CD8-positive, alpha-beta T cell (primary cell): ENCODE measurements at regions of chr7 and their contacts with region 1.

Region 1: DNA sequence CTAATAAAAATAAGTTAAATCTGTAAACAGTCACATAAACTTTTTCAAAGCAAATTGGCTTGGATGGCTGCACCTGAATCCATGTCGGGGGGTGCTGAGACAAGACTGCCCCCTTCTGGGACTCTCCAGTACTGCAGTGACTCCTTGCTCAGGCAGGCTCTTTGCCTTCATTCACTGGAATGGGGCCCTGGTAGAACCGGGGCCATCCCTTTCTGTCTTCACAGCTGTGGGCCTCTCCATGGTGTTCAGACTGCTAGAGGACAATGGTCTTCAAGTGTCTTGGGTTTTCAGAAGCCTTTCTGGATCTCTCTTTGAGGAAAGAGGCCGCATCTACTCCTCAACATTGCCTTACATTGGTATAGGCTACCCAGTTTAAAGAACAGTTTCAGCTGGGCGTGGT is 16.1 kb upstream of the IMPDH1 start:
- DNase-seq: peak; percentile 56 to 85 (median 81)
- ATAC-seq: peak; percentile 80
- H3K4me3 ChIP-seq: no peak overlapping the region
- H3K4me3 Mint-ChIP-seq: no peak overlapping the region
- H3K27ac ChIP-seq: no peak overlapping the region
- H3K27ac Mint-ChIP-seq: no peak overlapping the region
- H3K4me1 ChIP-seq: no peaks in the 10 kb centered on the region
- H3K4me1 Mint-ChIP-seq: peaks cover 8% of the 10 kb centered on the region
- H3K27me3 ChIP-seq: no peaks in the 10 kb centered on the region
- H3K27me3 Mint-ChIP-seq: peaks cover 10% of the 10 kb centered on the region
- CTCF ChIP-seq: peak; percentile 96

Region 2: DNA sequence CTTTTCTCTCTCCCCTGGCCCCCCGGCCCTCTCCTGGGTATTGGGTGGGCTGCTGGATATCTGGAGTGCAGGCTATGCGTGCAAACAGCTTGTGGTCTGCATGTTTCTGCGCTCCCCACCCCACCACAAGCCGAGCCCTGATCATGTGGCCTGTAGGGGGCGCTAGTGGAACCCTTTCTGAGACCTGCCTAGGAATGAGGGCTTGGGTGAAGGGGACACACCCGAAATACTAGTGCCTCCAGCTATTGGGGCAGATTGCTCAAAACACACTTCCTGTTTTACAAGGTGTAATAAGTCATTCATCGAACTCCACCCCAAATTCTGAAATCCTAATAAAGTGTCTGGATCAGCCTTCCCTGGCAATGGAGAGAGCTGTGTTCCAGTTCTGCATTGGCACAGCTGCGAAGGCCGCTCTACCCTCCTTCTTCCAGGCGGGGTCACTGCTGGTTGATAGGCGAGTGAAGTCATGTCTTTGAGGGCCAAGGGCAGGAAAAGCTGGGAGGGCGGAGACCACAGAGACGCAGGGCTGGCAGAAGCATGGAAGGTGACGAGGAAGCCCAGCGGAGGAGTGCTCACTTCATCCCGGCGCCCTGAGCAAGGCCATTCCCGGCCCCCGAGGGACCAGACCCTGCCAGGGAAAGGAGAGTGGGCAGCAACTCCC is 44.6 kb before region 1 on chr7:
- CTCF ChIA-PET with region 1: interaction called, 34 read pairs
- POLR2A ChIA-PET with region 1: no interaction called
- intact Hi-C with region 1: no loop called
- DNase-seq: peak in 3 of 9 experiments; percentile 42 to 47 (median 44)
- ATAC-seq: no peak
- H3K4me3 ChIP-seq: no peak overlapping the region
- H3K4me3 Mint-ChIP-seq: no peak overlapping the region
- H3K27ac ChIP-seq: no peak overlapping the region
- H3K27ac Mint-ChIP-seq: no peak overlapping the region
- H3K4me1 ChIP-seq: no peaks in the 10 kb centered on the region
- H3K4me1 Mint-ChIP-seq: no peaks in the 10 kb centered on the region
- H3K27me3 ChIP-seq: no peaks in the 10 kb centered on the region
- H3K27me3 Mint-ChIP-seq: no peaks in the 10 kb centered on the region
- CTCF ChIP-seq: peak; percentile 50

Region 3: DNA sequence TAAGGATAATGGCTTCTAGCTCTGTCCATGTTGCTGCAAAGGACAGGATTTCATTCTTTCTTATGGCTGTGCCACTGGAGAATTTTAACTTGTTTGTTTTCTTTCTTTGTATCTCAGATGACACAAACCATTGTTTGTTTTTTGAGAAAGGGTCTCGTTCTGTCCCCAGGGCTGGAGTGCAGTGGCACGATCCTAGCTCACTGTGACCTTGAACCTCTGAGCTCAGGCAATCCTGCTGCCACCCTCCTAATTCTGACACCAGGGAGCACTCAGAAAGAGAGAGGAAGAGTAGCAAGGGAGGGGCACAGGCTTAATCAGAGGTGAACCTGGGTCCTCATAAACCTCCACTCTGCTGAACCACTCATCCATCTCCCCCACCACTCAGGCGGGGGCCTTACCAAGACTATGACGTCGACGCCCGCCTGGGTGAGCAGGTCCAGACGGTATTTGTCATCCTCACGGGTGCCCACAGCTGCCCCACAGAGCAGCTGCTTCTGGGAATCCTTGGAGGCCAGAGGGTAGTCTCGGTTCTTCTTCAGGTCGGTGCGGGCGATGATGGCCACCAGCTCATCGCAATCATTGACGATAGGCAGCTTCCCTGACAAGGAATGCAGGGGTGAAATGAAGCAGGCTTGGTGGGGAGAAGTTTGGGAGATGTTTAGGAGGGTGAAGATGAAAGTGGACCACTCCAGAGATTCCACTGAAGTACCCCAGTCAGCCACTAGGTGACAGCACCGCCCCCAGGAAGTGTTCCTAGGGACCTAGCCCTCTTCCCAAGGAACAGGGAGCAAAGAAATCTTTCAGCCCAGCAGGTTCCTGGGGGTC is 27.6 kb before region 1 on chr7:
- CTCF ChIA-PET with region 1: interaction called, 389 read pairs
- POLR2A ChIA-PET with region 1: no interaction called
- intact Hi-C with region 1: loop called in 1 of 2 experiments (anchors 1 kb)
- DNase-seq: peak in 8 of 9 experiments; percentile 27 to 65 (median 50)
- ATAC-seq: peak; percentile 75
- H3K4me3 ChIP-seq: no peak overlapping the region
- H3K4me3 Mint-ChIP-seq: no peak overlapping the region
- H3K27ac ChIP-seq: no peak overlapping the region
- H3K27ac Mint-ChIP-seq: no peak overlapping the region
- H3K4me1 ChIP-seq: no peaks in the 10 kb centered on the region
- H3K4me1 Mint-ChIP-seq: peaks cover 3% of the 10 kb centered on the region
- H3K27me3 ChIP-seq: no peaks in the 10 kb centered on the region
- H3K27me3 Mint-ChIP-seq: no peaks in the 10 kb centered on the region
- CTCF ChIP-seq: peak; percentile 91

Region 4: DNA sequence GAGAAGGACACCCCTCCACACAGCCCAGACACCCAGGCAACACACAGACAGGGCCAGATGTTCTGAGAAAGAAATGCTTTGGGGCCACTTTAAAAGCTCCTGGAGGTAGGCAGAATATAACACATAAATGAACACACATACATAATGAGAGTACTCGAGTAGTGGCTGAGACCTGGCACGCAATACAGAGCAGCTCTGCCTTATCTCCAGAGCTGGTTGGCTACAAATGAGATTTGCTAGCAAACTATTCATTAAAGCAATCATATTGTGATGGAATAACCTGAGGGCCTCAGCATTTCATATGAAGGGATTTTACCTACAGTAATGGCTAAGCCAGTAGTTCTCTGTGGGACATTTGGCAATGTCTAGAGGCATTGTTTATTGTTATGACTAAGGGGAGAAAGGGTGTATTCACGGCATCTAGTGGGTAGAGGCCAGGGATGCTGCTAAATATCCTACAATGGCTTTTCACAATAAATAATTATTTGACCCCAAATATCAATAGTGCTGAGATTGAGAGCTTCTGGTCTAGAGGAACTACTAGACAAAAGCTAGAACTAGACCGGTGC is 10.5 kb before region 1 on chr7:
- CTCF ChIA-PET with region 1: interaction called, 389 read pairs
- POLR2A ChIA-PET with region 1: interaction called, 5 read pairs
- intact Hi-C with region 1: no loop called
- DNase-seq: no peak
- ATAC-seq: no peak
- H3K4me3 ChIP-seq: no peak overlapping the region
- H3K4me3 Mint-ChIP-seq: no peak overlapping the region
- H3K27ac ChIP-seq: no peak overlapping the region
- H3K27ac Mint-ChIP-seq: no peak overlapping the region
- H3K4me1 ChIP-seq: peaks cover 3% of the 10 kb centered on the region
- H3K4me1 Mint-ChIP-seq: peaks cover 3% of the 10 kb centered on the region
- H3K27me3 ChIP-seq: no peaks in the 10 kb centered on the region
- H3K27me3 Mint-ChIP-seq: no peaks in the 10 kb centered on the region
- CTCF ChIP-seq: no peak

Region 5: GRCh38 chr7:128443831-128444600 is 18.2 kb after region 1 on chr7:
- CTCF ChIA-PET with region 1: interaction called, 47 read pairs
- POLR2A ChIA-PET with region 1: no interaction called
- intact Hi-C with region 1: loop called in 1 of 2 experiments (anchors 2 kb)
- DNase-seq: no peak
- ATAC-seq: peak; percentile 48
- H3K4me3 ChIP-seq: no peak overlapping the region
- H3K4me3 Mint-ChIP-seq: no peak overlapping the region
- H3K27ac ChIP-seq: no peak overlapping the region
- H3K27ac Mint-ChIP-seq: no peak overlapping the region
- H3K4me1 ChIP-seq: no peaks in the 10 kb centered on the region
- H3K4me1 Mint-ChIP-seq: no peaks in the 10 kb centered on the region
- H3K27me3 ChIP-seq: no peaks in the 10 kb centered on the region
- H3K27me3 Mint-ChIP-seq: no peaks in the 10 kb centered on the region
- CTCF ChIP-seq: no peak

Region 6: DNA sequence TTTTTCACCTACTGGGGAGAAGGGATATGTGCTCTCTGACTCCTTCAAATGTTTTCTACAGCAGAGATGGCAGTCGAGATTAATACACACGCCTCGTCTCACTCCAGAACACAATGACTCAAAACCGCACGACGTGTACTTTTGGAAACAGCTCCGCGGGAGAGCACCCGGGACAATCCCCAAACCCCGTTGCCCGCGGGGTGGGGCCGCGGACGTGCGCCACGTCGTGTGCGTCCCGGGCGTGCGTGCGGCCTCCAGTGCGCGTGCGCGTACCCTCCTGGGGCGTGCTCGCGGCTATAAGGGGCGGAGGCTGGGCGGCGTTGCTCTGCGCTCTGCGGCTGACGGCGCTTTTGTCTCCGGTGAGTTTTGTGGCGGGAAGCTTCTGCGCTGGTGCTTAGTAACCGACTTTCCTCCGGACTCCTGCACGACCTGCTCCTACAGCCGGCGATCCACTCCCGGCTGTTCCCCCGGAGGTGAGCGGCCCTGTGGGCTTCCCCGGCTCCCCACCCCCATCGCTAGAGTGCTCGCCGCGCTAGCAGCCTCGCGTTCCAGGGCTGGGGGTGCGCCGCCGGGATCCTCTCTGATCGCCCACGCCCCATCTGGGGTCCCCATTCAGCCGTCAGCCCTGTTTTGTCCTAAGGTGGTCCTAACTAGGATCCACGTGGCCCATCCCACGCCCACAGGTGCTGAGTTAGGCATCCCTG is 29.9 kb after region 1 on chr7 and contains the start of gene HILPDA:
- CTCF ChIA-PET with region 1: interaction called, 325 read pairs
- POLR2A ChIA-PET with region 1: interaction called, 22 read pairs
- intact Hi-C with region 1: loop called in 1 of 2 experiments (anchors 1 kb)
- DNase-seq: peak; percentile 84 to 98 (median 93)
- ATAC-seq: peak; percentile 92
- H3K4me3 ChIP-seq: peak within 1 kb of the TSS; percentile 83 to 91
- H3K4me3 Mint-ChIP-seq: peak within 1 kb of the TSS; percentile 95
- H3K27ac ChIP-seq: peak within 1 kb of the TSS; percentile 60 to 73
- H3K27ac Mint-ChIP-seq: peak within 1 kb of the TSS; percentile 98
- H3K4me1 ChIP-seq: peaks cover 19% of the 10 kb centered on the region
- H3K4me1 Mint-ChIP-seq: peaks cover 26% of the 10 kb centered on the region
- H3K27me3 ChIP-seq: no peaks in the 10 kb centered on the region
- H3K27me3 Mint-ChIP-seq: no peaks in the 10 kb centered on the region
- CTCF ChIP-seq: no peak
- total RNA-seq, gene HILPDA: 1.3 to 2.0 TPM